Esophagus muscularis mucosa (tissue), 4 donors: ENCODE measurements at regions of chr21 and their contacts with region 1.

Region 1: DNA sequence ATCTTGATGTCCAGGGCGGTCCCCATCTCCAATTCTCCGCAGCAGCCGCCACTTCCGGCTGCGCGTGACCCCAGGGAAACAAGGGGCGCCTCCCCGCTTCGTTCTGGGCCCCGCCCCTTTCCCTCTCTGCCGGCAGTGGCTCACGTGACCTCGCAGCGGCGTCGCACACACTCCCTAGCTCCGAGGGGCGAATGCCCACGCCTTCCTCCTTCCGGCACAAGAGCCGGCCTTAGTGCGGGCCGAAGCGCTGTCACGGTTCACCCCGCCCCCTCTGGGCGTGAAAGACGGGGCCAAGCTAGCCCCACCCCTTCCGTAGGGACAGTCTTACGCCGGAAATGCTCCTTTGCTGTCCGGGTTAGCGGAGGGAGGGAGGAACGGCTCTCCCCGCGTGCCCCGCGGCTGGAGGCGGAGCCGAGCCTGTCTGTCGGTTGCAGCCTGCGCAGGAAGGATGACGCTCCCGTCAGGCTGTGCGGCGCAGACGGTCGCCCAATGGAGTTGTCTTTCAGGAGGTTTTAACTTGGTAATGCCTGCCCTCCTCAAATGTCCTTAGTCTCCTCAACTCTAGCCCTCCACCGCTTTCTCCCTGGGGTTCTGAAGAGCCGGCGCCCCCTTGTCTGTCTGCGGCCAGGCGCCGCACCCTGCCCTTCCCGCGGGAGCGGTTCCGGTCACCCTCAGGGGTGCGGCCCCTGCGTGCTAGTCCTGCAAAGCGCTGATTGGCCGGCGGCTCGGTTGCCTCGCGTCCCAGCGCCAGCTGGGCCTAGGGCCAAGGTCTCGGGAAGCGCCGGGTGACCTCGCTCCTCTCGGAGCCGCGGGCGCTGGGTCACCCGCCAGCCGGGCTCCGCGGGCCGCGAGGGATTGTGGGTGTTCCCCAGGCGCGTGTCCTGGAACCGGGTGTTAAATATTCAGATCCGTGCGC is at the start of gene VPS26C:
- DNase-seq: peak; percentile 99
- H3K4me3 ChIP-seq: peak within 1 kb of the TSS; percentile 69 to 99 (median 78)
- H3K27ac ChIP-seq: peak within 1 kb of the TSS; percentile 93 to 98 (median 96)
- H3K4me1 ChIP-seq: peaks cover 20 to 41% (median 39%) of the 10 kb centered on the region in 4 donors
- H3K27me3 ChIP-seq: no peaks in the 10 kb centered on the region
- CTCF ChIP-seq: peak in 1 of 3 experiments; percentile 15
- EP300 ChIP-seq: peak; percentile 25
- POLR2A ChIP-seq: peak; percentile 67
- total RNA-seq, gene VPS26C: 56.5 to 71.3 (median 59.7) TPM

Region 2: GRCh38 chr21:37072988-37073416 is 194.5 kb before region 1 on chr21 and contains the starts of genes PIGP and TTC3:
- intact Hi-C with region 1: loop called (anchors 5 kb)
- DNase-seq: peak; percentile 96
- H3K4me3 ChIP-seq: peak within 1 kb of the TSS; percentile 75 to 97 (median 76)
- H3K27ac ChIP-seq: peak within 1 kb of the TSS; percentile 92 to 100 (median 100)
- H3K4me1 ChIP-seq: peaks cover 16 to 40% (median 32%) of the 10 kb centered on the region in 4 donors
- H3K27me3 ChIP-seq: no peaks in the 10 kb centered on the region
- CTCF ChIP-seq: peak in 1 of 3 experiments; percentile 3
- EP300 ChIP-seq: no peak
- POLR2A ChIP-seq: peak; percentile 50
- total RNA-seq, gene PIGP: 20.3 to 30.7 (median 21.6) TPM
- total RNA-seq, gene TTC3: 86.0 to 162 (median 104) TPM

Region 3: GRCh38 chr21:37166733-37167132 is 100.8 kb before region 1 on chr21:
- intact Hi-C with region 1: no loop called
- DNase-seq: no peak
- H3K4me3 ChIP-seq: no peak overlapping the region
- H3K27ac ChIP-seq: no peak overlapping the region
- H3K4me1 ChIP-seq: peaks cover 0 to 9% (median 9%) of the 10 kb centered on the region in 4 donors
- H3K27me3 ChIP-seq: no peaks in the 10 kb centered on the region
- CTCF ChIP-seq: peak in 2 of 3 experiments; percentile 16 to 37
- EP300 ChIP-seq: no peak
- POLR2A ChIP-seq: no peak

Region 4: GRCh38 chr21:37563641-37564340 is 296.3 kb after region 1 on chr21:
- intact Hi-C with region 1: loop called (anchors 5 kb)
- DNase-seq: peak; percentile 97
- H3K4me3 ChIP-seq: peak overlapping the region; percentile 67 to 85 (median 73)
- H3K27ac ChIP-seq: peak overlapping the region; percentile 86 to 95 (median 89)
- H3K4me1 ChIP-seq: peaks cover 11 to 24% (median 20%) of the 10 kb centered on the region in 4 donors
- H3K27me3 ChIP-seq: no peaks in the 10 kb centered on the region
- CTCF ChIP-seq: peak; percentile 53 to 58 (median 56)
- EP300 ChIP-seq: no peak
- POLR2A ChIP-seq: peak; percentile 51

Region 5: DNA sequence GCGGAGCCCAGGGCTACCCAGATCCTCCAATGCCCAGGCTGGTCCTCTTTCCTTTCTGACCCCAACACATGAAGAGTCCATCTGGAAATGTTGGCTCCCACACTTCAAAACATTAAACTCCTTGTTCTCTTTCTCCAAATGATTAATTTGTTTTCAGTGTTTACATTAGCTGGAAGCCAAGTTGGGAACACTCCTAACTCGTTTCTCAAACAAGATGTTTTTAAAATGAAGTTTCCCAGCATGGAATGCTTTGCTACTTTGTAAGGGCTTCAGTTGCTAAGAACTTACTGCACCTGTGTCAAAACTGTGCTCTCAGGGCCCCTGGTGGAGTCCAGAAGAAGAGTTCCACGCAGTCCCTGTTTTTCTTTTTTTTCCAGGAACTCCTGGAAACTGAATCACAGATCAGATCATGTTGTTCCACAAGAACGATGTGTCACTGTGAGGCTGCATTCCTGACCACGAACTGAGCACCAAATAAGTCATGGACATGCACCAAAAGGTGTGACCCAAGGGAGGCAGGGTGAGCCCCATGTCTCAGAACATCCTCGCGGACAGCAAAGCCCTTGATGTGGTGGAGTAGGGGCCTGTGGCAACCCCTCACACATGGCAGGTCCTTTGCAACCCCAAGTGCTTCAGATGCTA is 391.4 kb after region 1 on chr21:
- intact Hi-C with region 1: loop called (anchors 5 kb)
- DNase-seq: no peak
- H3K4me3 ChIP-seq: peak overlapping the region; percentile 4 to 26 (median 12)
- H3K27ac ChIP-seq: peak overlapping the region; percentile 78 to 89 (median 86)
- H3K4me1 ChIP-seq: peaks cover 25 to 38% (median 32%) of the 10 kb centered on the region in 4 donors
- H3K27me3 ChIP-seq: no peaks in the 10 kb centered on the region
- CTCF ChIP-seq: peak in 2 of 3 experiments; percentile 50
- EP300 ChIP-seq: peak; percentile 89
- POLR2A ChIP-seq: no peak